Left ventricle myocardium superior (tissue), 1 donor: ENCODE measurements at regions of chr2 and their contacts with region 1.

Region 1: GRCh38 chr2:118219611-118220010 is 131.3 kb downstream of the INSIG2 start:
- DNase-seq: no peak
- ATAC-seq: no peak

Region 2: GRCh38 chr2:118855451-118856279 is 636.1 kb after region 1 on chr2:
- intact Hi-C with region 1: loop called (anchors 10 kb)
- DNase-seq: peak; percentile 90
- ATAC-seq: peak; percentile 94